ENCODE measurements at regions of chr14 and their contacts with region 1.

Region 1: GRCh38 chr14:93231129-93231979 is 24.3 kb downstream of the UBR7 start:
- DNase-seq: no peak
- ATAC-seq: no peak
- H3K4me3 ChIP-seq: no peak overlapping the region
- H3K27ac ChIP-seq: no peak overlapping the region
- H3K4me1 ChIP-seq: peaks cover 0 to 4% of the 10 kb centered on the region in 2 experiments; a peak in 1 of 5 replicates
- H3K27me3 ChIP-seq: 0 out of 5 replicates have a peak, but pooled peaks cover 0 to 4% of the 10 kb centered on the region in 2 experiments
- CTCF ChIP-seq: no peak
- EP300 ChIP-seq: no peak
- POLR2A ChIP-seq: no peak
- RAD21 ChIP-seq: no peak

Region 2: GRCh38 chr14:92352158-92352985 is 879.0 kb before region 1 on chr14:
- CTCF ChIA-PET with region 1: no interaction called
- POLR2A ChIA-PET with region 1: no interaction called
- in situ Hi-C with region 1: no loop called
- intact Hi-C with region 1: no loop called
- DNase-seq: peak; percentile 32 to 43 (median 42)
- ATAC-seq: peak; percentile 60; the same call in 2 of the 3 replicates
- H3K4me3 ChIP-seq: no peak overlapping the region
- H3K27ac ChIP-seq: no peak overlapping the region
- H3K4me1 ChIP-seq: no peaks in the 10 kb centered on the region
- H3K27me3 ChIP-seq: peaks cover 0 to 8% of the 10 kb centered on the region in 2 experiments; a peak in 2 of 5 replicates
- CTCF ChIP-seq: peak; percentile 47 to 53 (median 51); a peak in 5 of 6 replicates
- EP300 ChIP-seq: no peak
- POLR2A ChIP-seq: no peak
- RAD21 ChIP-seq: peak in 1 of 2 experiments; percentile 32; a peak in 2 of 4 replicates

Region 3: DNA sequence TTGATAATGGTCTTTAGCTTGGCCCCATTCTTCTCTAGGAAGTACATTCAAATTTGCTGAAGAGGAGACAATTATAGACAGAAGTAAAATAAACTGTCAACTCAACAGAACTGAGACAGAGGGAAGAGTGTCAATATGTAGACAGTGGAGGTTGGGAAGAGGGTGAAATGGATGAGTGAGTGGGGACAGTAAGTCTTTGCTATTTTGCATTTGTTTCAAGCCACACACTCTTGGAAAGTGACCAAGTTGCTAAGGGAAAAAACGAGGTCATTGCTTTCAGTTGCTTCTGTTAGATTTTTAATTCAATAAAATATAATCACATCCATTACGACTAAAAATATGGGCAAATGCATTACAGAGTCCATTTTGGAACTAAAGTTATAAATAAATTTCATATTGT is 53.7 kb after region 1 on chr14:
- CTCF ChIA-PET with region 1: no interaction called
- POLR2A ChIA-PET with region 1: no interaction called
- in situ Hi-C with region 1: no loop called
- intact Hi-C with region 1: no loop called
- DNase-seq: no peak
- ATAC-seq: no peak
- H3K4me3 ChIP-seq: no peak overlapping the region
- H3K27ac ChIP-seq: no peak overlapping the region
- H3K4me1 ChIP-seq: no peaks in the 10 kb centered on the region; a peak in 3 of 5 replicates
- H3K27me3 ChIP-seq: no peaks in the 10 kb centered on the region
- CTCF ChIP-seq: no peak
- EP300 ChIP-seq: no peak
- POLR2A ChIP-seq: no peak
- RAD21 ChIP-seq: no peak

Region 4: GRCh38 chr14:93471083-93471482 is 239.7 kb after region 1 on chr14:
- CTCF ChIA-PET with region 1: no interaction called
- POLR2A ChIA-PET with region 1: no interaction called
- in situ Hi-C with region 1: no loop called
- intact Hi-C with region 1: loop called (anchors 10 kb)
- DNase-seq: no peak
- ATAC-seq: no peak
- H3K4me3 ChIP-seq: no peak overlapping the region
- H3K27ac ChIP-seq: no peak overlapping the region
- H3K4me1 ChIP-seq: no peaks in the 10 kb centered on the region
- H3K27me3 ChIP-seq: peaks cover 0 to 5% of the 10 kb centered on the region in 2 experiments; a peak in 1 of 5 replicates
- CTCF ChIP-seq: no peak
- EP300 ChIP-seq: no peak
- POLR2A ChIP-seq: no peak
- RAD21 ChIP-seq: no peak

Region 5: DNA sequence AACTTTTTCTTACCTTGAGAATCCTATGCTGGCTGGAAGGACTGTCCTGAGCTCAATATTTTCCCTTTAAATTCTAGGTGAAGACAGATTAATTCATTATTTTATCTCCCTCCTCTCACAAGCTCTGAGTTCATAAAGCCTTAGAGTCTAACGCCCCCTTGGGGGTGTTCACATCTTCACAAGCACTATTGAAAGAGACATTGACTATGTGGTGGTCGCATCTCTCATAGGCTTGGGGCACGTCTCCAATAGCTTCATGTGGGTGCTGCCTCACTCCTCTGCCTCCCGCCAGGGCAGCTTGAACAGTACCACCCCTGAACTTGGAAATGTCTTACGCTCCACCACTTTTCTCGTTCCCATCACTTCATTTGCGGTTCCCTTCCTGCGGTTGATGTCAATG is 305.6 kb after region 1 on chr14:
- CTCF ChIA-PET with region 1: interaction called, 3 read pairs
- POLR2A ChIA-PET with region 1: no interaction called
- in situ Hi-C with region 1: no loop called
- intact Hi-C with region 1: loop called (anchors 1 kb)
- DNase-seq: peak in 1 of 4 experiments; percentile 4
- ATAC-seq: no peak
- H3K4me3 ChIP-seq: no peak overlapping the region
- H3K27ac ChIP-seq: no peak overlapping the region
- H3K4me1 ChIP-seq: no peaks in the 10 kb centered on the region
- H3K27me3 ChIP-seq: peaks cover 0 to 4% of the 10 kb centered on the region in 2 experiments; a peak in 1 of 5 replicates
- CTCF ChIP-seq: peak in 2 of 3 experiments; percentile 16 to 31; a peak in 3 of 6 replicates
- EP300 ChIP-seq: no peak
- POLR2A ChIP-seq: no peak
- RAD21 ChIP-seq: peak in 1 of 2 experiments; percentile 47; a peak in 2 of 4 replicates

Region 6: GRCh38 chr14:93619176-93619793 is 387.9 kb after region 1 on chr14:
- CTCF ChIA-PET with region 1: interaction called, 4 read pairs
- POLR2A ChIA-PET with region 1: no interaction called
- in situ Hi-C with region 1: no loop called
- intact Hi-C with region 1: loop called (anchors 5 kb)
- DNase-seq: peak; percentile 16 to 31 (median 23)
- ATAC-seq: peak; percentile 67
- H3K4me3 ChIP-seq: no peak overlapping the region
- H3K27ac ChIP-seq: no peak overlapping the region
- H3K4me1 ChIP-seq: no peaks in the 10 kb centered on the region
- H3K27me3 ChIP-seq: peaks cover 0 to 13% of the 10 kb centered on the region in 2 experiments; a peak in 4 of 5 replicates
- CTCF ChIP-seq: peak; percentile 39 to 65 (median 51); a peak in 5 of 6 replicates
- EP300 ChIP-seq: no peak
- POLR2A ChIP-seq: no peak
- RAD21 ChIP-seq: peak; percentile 59 to 62

Measured in K562 (cell line).